T-cell (primary cell): ENCODE measurements at regions of chr6 and their contacts with region 1.

Region 1: DNA sequence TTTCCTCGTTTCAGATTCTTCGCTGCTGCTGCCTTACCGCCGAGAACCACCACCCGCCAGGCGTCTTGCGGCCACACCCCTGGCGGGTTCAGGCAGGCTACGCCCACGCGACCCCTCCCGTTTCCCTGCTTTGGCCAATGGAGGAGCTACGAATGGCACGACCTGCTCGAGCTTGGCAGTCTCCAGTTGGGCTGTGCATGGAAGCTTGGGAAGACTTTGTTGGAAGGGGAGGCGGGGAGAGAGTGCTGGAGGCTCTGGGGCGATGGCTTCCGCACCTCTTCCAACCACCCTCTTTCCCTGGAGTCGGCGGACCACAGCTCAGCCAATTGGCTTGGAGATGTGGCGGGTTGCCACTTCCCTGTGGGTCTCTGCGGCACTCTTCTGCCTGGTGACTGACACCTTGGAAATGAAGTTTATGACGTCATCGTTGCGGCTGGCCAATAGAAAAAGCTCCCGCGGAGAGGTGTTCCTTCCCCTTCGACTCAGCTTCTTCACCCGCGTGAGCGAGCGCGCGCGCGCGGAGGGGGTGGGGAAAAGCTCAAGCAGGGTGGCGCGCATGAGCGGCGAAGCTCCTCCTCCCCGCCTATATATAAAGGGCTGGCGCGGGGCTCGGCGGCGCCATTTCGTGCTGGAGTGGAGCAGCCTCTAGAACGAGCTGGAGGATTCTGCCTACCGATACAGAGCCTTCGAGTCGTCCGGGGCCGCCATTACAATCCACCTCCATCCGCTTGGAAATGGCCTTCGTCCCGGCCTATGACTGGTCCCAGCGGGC is 3.4 kb downstream of the BRD2 start:
- DNase-seq: peak; percentile 99 to 100 (median 100)
- ATAC-seq: peak; percentile 60 to 62 (median 60)
- H3K4me3 ChIP-seq: peak overlapping the region; percentile 72 to 89
- H3K4me3 Mint-ChIP-seq: peak overlapping the region; percentile 96 to 99 (median 99)
- H3K27ac ChIP-seq: peak overlapping the region; percentile 92
- H3K27ac Mint-ChIP-seq: peak overlapping the region; percentile 99
- H3K4me1 ChIP-seq: peaks cover 22 to 45% of the 10 kb centered on the region in 2 experiments
- H3K4me1 Mint-ChIP-seq: peaks cover 30 to 69% (median 40%) of the 10 kb centered on the region in 3 donors
- H3K27me3 ChIP-seq: peaks cover 0 to 4% of the 10 kb centered on the region in 2 experiments
- H3K27me3 Mint-ChIP-seq: no peaks in the 10 kb centered on the region

Region 2: DNA sequence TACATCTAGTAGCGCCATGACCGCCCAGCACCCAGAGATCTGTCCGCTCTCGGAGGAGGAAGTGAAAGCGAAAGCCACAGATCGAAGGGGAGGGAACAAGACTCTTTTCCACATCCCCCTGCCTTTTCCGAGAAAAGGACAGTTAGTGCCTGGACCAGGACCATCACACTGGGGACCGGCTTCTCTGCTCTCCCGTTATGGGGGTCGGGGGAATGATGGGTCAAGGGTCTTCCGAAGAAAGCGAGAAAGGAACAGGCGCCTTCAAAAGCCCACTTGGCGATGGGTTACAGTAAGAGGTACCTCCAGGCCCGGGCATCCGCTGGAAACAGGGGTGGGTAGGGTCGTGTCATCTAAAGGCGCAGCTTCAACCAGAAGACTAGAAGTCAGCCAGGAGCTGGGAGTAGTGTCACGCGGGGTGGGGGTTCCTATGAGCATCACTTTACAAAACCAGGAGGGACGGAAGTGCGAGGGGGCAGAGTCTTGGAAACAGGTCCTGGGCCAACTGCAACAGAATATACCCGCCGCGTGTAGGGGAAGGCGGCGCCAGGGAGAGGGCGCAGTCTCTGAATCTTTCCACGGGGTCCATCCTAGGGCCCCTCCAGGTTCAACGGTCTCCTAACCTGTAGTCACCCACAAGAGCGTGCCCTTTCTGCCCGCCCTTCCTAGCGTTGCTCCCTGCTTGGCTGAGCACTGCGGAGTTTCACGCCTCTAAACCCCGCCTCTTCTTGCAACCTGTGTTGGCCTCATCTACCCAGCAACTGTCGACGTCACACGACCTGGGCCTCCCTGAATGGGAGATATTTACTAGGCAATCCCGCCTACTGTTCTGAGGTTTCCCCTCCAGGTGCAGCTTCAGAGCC is 127.6 kb before region 1 on chr6 and contains the start of gene PSMB8:
- CTCF ChIA-PET with region 1: interaction called in 1 of 2 experiments, 24 read pairs
- POLR2A ChIA-PET with region 1: interaction called, 13 to 47 read pairs
- DNase-seq: peak; percentile 96 to 100 (median 98)
- ATAC-seq: peak; percentile 79 to 82 (median 81)
- H3K4me3 ChIP-seq: peak within 1 kb of the TSS; percentile 97 to 98
- H3K4me3 Mint-ChIP-seq: peak within 1 kb of the TSS; percentile 98 to 100 (median 100)
- H3K27ac ChIP-seq: peak within 1 kb of the TSS; percentile 100
- H3K27ac Mint-ChIP-seq: peak within 1 kb of the TSS; percentile 100
- H3K4me1 ChIP-seq: peaks cover 52 to 72% of the 10 kb centered on the region in 2 experiments
- H3K4me1 Mint-ChIP-seq: peaks cover 79 to 90% (median 84%) of the 10 kb centered on the region in 3 donors
- H3K27me3 ChIP-seq: no peaks in the 10 kb centered on the region
- H3K27me3 Mint-ChIP-seq: no peaks in the 10 kb centered on the region
- total RNA-seq, gene PSMB8: 131 to 171 (median 150) TPM

Region 3: DNA sequence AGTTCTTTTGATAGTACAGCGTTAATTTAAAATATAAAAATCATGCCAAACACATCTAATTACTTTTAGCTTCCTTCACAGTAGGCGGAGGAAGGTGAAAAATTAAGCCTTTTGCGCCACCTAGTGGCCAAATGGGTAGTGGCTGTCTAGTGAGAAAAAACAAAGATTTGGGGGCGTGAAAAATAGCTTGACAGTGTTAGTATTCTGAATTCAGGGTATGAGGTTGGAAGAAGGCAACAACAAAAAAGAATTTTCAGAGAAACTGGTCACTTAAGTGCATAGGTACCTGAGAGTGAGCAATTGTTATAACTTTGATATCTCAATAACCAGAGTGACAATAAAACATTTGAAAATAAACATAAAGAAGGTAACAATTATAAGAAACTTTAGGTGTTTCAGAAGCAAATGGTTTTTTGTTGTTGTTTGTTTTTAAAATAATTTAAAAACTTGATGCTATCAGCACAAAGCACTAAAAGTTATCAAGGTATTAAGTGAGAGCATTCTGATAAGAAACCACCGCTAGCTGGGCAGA is 103.4 kb before region 1 on chr6:
- CTCF ChIA-PET with region 1: interaction called in 1 of 2 experiments, 13 read pairs
- POLR2A ChIA-PET with region 1: interaction called in 1 of 2 experiments, 6 read pairs
- DNase-seq: peak; percentile 64 to 95 (median 83)
- ATAC-seq: peak; percentile 73 to 81 (median 76)
- H3K4me3 ChIP-seq: no peak overlapping the region
- H3K4me3 Mint-ChIP-seq: no peak overlapping the region
- H3K27ac ChIP-seq: no peak overlapping the region
- H3K27ac Mint-ChIP-seq: peak overlapping the region in 1 of 2 donors; percentile 4
- H3K4me1 ChIP-seq: peaks cover 13 to 16% of the 10 kb centered on the region in 2 experiments
- H3K4me1 Mint-ChIP-seq: peaks cover 25 to 35% (median 34%) of the 10 kb centered on the region in 3 donors
- H3K27me3 ChIP-seq: no peaks in the 10 kb centered on the region
- H3K27me3 Mint-ChIP-seq: no peaks in the 10 kb centered on the region

Region 4: DNA sequence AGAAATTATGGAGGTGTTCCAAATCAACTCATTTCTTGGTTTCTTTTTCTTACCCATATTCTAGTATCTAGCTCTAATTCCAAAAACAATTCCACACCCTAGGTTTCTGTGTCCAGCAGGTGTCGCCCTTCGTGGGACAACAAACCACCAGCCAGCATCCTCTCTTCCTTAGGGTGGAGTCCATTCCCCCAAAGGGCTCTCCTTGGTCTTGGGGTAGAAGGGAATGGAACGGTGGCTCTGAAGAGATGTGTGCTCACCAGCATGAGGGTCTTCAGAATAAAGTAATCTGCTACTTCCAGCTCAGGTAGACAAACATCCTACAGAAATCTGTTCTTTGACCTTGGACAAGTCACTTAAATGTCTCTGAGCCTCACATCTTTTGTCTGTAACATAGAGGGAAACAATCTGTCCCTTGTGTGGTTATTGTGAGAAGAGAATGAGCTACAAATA is 38.1 kb before region 1 on chr6:
- CTCF ChIA-PET with region 1: interaction called, 3 to 30 read pairs
- POLR2A ChIA-PET with region 1: interaction called, 3 to 6 read pairs
- DNase-seq: peak; percentile 35 to 87 (median 70)
- ATAC-seq: peak; percentile 40 to 73 (median 62)
- H3K4me3 ChIP-seq: no peak overlapping the region
- H3K4me3 Mint-ChIP-seq: no peak overlapping the region
- H3K27ac ChIP-seq: no peak overlapping the region
- H3K27ac Mint-ChIP-seq: peak overlapping the region in 1 of 2 donors; percentile 1
- H3K4me1 ChIP-seq: peaks cover 0 to 3% of the 10 kb centered on the region in 2 experiments
- H3K4me1 Mint-ChIP-seq: peaks cover 3 to 18% (median 5%) of the 10 kb centered on the region in 3 donors
- H3K27me3 ChIP-seq: no peaks in the 10 kb centered on the region
- H3K27me3 Mint-ChIP-seq: no peaks in the 10 kb centered on the region

Region 5: GRCh38 chr6:32952817-32953739 is 18.7 kb before region 1 on chr6 and contains the start of gene HLA-DMA:
- CTCF ChIA-PET with region 1: interaction called, 3 to 207 read pairs
- POLR2A ChIA-PET with region 1: interaction called, 30 to 49 read pairs
- DNase-seq: peak; percentile 57 to 89 (median 73)
- ATAC-seq: peak; percentile 97 to 99 (median 98)
- H3K4me3 ChIP-seq: peak within 1 kb of the TSS; percentile 38 to 65
- H3K4me3 Mint-ChIP-seq: peak within 1 kb of the TSS; percentile 66 to 82 (median 82)
- H3K27ac ChIP-seq: peak within 1 kb of the TSS; percentile 35
- H3K27ac Mint-ChIP-seq: peak within 1 kb of the TSS; percentile 83 to 91
- H3K4me1 ChIP-seq: peaks cover 9 to 41% of the 10 kb centered on the region in 2 experiments
- H3K4me1 Mint-ChIP-seq: peaks cover 41 to 59% (median 43%) of the 10 kb centered on the region in 3 donors
- H3K27me3 ChIP-seq: no peaks in the 10 kb centered on the region
- H3K27me3 Mint-ChIP-seq: no peaks in the 10 kb centered on the region
- total RNA-seq, gene HLA-DMA: 22.3 to 37.8 (median 27.5) TPM

Region 6: DNA sequence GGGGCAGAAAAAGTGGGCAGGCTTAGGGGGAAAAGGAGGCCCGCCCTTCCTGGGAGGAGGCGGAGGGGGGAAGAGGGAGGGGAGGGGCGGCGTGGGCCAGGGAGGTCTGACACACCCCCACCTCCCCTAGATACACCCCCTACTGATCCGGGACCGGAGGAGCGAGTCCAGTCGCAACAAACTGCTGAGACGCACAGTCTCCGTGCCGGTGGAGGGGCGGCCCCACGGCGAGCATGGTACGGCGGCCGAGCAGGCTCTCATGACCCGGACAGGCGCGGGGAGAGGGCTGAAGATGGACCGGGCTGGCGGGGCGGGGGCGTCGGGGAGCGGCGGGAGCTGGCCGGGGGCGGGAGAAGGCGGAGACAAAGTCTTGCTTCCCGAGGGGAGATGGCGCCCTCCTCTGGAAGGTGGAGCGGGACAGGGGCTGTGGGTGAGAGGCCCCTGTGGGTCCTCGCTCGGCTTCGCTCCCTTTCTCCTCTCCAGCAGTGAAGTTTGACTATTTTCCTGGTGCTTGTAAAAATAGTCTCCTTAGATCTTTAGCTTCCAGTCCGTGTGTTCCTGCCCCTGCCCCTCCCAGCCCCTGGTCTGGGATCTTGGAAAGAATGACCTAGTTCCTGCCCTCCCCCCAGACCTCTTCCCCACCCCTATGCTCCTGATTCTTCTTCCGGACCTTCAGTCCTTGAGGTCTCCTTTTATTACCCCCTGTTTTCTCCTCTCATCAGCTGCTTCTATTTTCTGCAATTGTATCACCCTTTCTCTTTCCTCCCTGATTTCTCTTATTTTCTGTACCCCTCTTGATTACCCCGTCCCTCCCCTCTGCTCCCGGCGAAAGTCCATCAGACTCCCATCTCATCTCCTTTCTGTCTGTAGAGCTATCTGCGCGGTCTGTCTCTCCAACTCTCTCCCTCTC is 454.2 kb after region 1 on chr6:
- CTCF ChIA-PET with region 1: no interaction called
- POLR2A ChIA-PET with region 1: no interaction called
- DNase-seq: peak; percentile 52 to 87 (median 68)
- ATAC-seq: peak; percentile 61 to 65 (median 62)
- H3K4me3 ChIP-seq: peak overlapping the region; percentile 65 to 69
- H3K4me3 Mint-ChIP-seq: peak overlapping the region; percentile 85 to 97 (median 86)
- H3K27ac ChIP-seq: peak overlapping the region; percentile 87
- H3K27ac Mint-ChIP-seq: peak overlapping the region; percentile 95 to 96
- H3K4me1 ChIP-seq: peaks cover 34 to 60% of the 10 kb centered on the region in 2 experiments
- H3K4me1 Mint-ChIP-seq: peaks cover 61 to 82% (median 78%) of the 10 kb centered on the region in 3 donors
- H3K27me3 ChIP-seq: no peaks in the 10 kb centered on the region
- H3K27me3 Mint-ChIP-seq: no peaks in the 10 kb centered on the region